ENCODE measurements at regions of chr9 and their contacts with region 1.

Region 1: DNA sequence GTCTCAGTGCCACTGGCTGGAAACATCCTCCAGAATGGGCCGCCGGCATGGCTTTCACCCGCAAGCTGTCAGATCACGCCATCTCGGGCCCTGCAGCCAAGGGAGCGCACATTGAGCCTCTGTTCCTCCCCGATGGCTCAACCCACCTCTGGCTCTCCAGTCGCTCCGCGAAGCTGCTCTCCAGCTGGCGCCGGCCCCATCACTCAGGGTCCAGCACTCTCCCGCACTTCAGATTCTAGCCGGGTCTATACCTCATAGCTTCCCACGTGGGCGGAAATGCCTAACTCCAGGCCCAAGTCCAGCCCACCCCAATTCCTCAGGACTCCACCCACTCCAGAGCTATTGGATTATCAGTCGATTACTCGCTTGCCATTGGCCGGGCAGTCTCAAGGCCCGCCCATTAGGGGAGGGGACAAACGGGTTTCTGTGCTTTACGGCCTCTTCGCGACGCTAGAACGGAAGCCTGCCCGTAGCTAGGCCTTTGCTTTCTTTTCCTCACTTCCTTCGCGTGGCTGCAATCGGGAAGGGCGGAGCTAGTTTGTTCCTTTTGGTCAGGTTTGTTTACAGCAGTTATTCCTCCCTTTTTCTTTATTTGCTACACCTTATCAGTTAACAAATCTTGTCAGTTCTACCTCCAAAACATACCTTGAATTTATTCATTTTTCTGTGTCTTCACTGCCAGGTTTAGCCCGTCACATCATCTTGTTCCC is at the start of gene NOL6:
- DNase-seq: peak; percentile 98
- ATAC-seq: peak; percentile 100
- H3K4me3 ChIP-seq: peak within 1 kb of the TSS; percentile 90
- H3K27ac ChIP-seq: 0 out of 2 replicates have a peak within 1 kb of the TSS, but pooled peaks have one; percentile 17
- H3K4me1 ChIP-seq: peaks cover 13% of the 10 kb centered on the region
- H3K27me3 ChIP-seq: no peaks in the 10 kb centered on the region
- CTCF ChIP-seq: no peak
- total RNA-seq, gene NOL6: 35.9 and 55.2 TPM in 2 replicates

Region 2: GRCh38 chr9:33297432-33297831 is 176.4 kb before region 1 on chr9:
- CTCF ChIA-PET with region 1: no interaction called
- POLR2A ChIA-PET with region 1: no interaction called
- intact Hi-C with region 1: no loop called
- DNase-seq: no peak
- ATAC-seq: no peak
- H3K4me3 ChIP-seq: no peak overlapping the region
- H3K27ac ChIP-seq: no peak overlapping the region
- H3K4me1 ChIP-seq: 0 out of 2 replicates have a peak, but pooled peaks cover under 1% of the 10 kb centered on the region
- H3K27me3 ChIP-seq: no peaks in the 10 kb centered on the region
- CTCF ChIP-seq: no peak

Region 3: DNA sequence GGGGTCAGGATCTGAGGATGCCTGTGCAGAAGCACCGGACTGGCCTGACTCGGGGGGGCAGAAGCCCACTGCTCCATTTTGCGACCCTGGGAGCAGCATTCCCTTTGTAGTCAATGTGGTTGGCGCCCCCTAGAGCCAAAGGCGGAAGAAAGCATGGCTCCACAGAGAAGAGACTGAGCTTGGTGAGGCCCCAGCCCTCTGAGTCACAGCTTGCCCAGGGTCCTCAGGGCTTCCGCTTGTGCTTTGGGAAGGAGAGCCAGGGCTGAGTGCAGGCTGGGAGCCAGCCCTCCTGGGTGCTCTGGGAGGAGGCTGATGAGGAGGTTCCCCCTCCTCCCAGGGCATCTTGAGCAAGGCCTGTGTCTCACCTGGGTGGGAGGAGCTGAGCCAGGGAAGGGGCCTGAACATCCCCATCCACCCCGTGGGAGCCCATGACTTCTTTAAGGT is 20.9 kb before region 1 on chr9:
- CTCF ChIA-PET with region 1: interaction called, 10 read pairs
- POLR2A ChIA-PET with region 1: no interaction called
- intact Hi-C with region 1: no loop called
- DNase-seq: peak; percentile 86
- ATAC-seq: peak; percentile 96
- H3K4me3 ChIP-seq: no peak overlapping the region
- H3K27ac ChIP-seq: peak overlapping the region; percentile 45
- H3K4me1 ChIP-seq: peaks cover 7% of the 10 kb centered on the region
- H3K27me3 ChIP-seq: no peaks in the 10 kb centered on the region
- CTCF ChIP-seq: peak; percentile 88

Region 4: DNA sequence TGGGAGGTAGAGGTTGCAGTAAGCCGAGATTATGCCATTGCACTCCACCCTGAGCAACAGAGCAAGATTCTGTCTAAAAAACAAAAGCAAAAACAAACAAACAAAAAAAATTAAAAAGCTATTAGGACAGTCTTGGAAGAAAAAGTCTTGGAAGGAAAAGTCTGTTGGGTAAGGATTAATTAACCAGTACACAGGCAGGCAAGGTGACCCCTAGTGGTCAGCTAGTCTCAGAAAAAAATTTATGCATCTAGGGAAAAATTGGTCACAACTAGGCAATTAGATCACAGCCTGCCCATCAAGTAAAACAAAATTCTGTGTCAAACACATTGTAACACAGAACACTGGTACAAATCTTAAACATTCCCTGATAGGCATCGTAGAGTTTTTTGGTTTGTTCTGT is 43.6 kb after region 1 on chr9:
- CTCF ChIA-PET with region 1: interaction called, 5 read pairs
- POLR2A ChIA-PET with region 1: no interaction called
- intact Hi-C with region 1: loop called (anchors 5 kb)
- DNase-seq: peak; percentile 57
- ATAC-seq: peak; percentile 71
- H3K4me3 ChIP-seq: no peak overlapping the region
- H3K27ac ChIP-seq: no peak overlapping the region
- H3K4me1 ChIP-seq: peaks cover 3% of the 10 kb centered on the region; the same call in 1 of the 2 replicates
- H3K27me3 ChIP-seq: no peaks in the 10 kb centered on the region
- CTCF ChIP-seq: peak; percentile 62

Measured in PC-3 (cell line).